PC-3 (cell line): ENCODE measurements at regions of chr2 and their contacts with region 1.

Region 1: DNA sequence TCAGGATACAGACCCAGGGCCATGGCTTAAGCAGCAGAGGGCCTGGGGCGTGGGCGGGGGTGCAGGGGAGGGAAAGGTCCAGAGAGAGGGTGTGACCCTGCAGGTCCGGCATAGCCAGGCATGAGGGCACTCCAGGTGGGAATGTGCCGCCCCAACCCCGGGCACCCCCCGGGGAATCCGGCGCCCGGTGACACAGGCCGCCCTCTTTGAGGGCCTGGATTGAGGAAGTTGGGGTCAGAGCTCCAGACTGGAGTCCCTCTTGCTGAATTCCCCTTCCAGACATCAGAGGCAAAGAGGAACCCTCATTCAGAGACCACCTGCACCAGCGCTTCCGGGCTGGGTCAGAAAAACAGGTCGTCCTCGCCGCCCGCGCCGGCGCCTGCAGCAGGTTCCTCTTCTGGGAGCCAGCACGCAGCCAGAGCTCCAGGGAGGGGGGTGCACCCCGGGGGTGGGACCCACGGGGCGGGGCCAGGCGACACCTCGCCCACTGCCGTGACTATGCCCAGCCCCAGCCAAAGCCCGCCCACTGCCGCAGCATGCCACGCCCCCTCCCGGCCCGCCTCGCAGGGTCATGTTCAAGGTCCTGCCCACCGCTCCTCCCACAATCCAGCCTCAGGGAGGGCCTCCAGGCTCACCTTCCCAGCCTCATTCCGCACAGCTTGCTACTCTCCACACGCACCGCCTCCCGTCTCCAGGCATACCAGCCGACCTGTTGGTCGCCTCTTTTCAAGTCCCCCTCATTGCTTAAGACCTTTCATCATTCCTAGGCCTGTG is 98.3 kb upstream of the ID2 start:
- DNase-seq: peak; percentile 79
- ATAC-seq: peak; percentile 99
- H3K4me3 ChIP-seq: peak overlapping the region; percentile 35; the same call in 1 of the 2 replicates
- H3K27ac ChIP-seq: no peak overlapping the region
- H3K4me1 ChIP-seq: peaks cover 6% of the 10 kb centered on the region; the same call in 1 of the 2 replicates
- H3K27me3 ChIP-seq: no peaks in the 10 kb centered on the region
- CTCF ChIP-seq: no peak

Region 2: GRCh38 chr2:7539760-7540159 is 1043.8 kb before region 1 on chr2:
- CTCF ChIA-PET with region 1: no interaction called
- POLR2A ChIA-PET with region 1: no interaction called
- intact Hi-C with region 1: no loop called
- DNase-seq: no peak
- ATAC-seq: no peak
- H3K4me3 ChIP-seq: no peak overlapping the region
- H3K27ac ChIP-seq: no peak overlapping the region
- H3K4me1 ChIP-seq: no peaks in the 10 kb centered on the region
- H3K27me3 ChIP-seq: no peaks in the 10 kb centered on the region
- CTCF ChIP-seq: no peak

Region 3: GRCh38 chr2:8662239-8662895 is 78.8 kb after region 1 on chr2:
- CTCF ChIA-PET with region 1: no interaction called
- POLR2A ChIA-PET with region 1: no interaction called
- intact Hi-C with region 1: loop called (anchors 5 kb)
- DNase-seq: peak; percentile 93
- ATAC-seq: peak; percentile 99
- H3K4me3 ChIP-seq: peak overlapping the region; percentile 6; the same call in 1 of the 2 replicates
- H3K27ac ChIP-seq: peak overlapping the region; percentile 53
- H3K4me1 ChIP-seq: peaks cover 16% of the 10 kb centered on the region
- H3K27me3 ChIP-seq: no peaks in the 10 kb centered on the region
- CTCF ChIP-seq: peak; percentile 57